K562 (cell line): ENCODE measurements at regions of chr19 and their contacts with region 1.

Region 1: GRCh38 chr19:45643024-45643926 is 4.1 kb upstream of the EML2 start:
- DNase-seq: peak; percentile 68 to 93 (median 76)
- ATAC-seq: peak; percentile 36
- H3K4me3 ChIP-seq: peak overlapping the region; percentile 38
- H3K27ac ChIP-seq: peak overlapping the region; percentile 80; the same call in 2 of the 3 replicates
- H3K4me1 ChIP-seq: peaks cover 31 to 62% of the 10 kb centered on the region in 2 experiments
- H3K27me3 ChIP-seq: no peaks in the 10 kb centered on the region
- CTCF ChIP-seq: peak; percentile 96 to 99 (median 97)
- EP300 ChIP-seq: 0 out of 2 replicates have a peak, but pooled peaks have one; percentile 12
- POLR2A ChIP-seq: no peak
- RAD21 ChIP-seq: peak; percentile 95 to 96

Region 2: GRCh38 chr19:45385392-45386221 is 257.7 kb before region 1 on chr19:
- CTCF ChIA-PET with region 1: no interaction called
- POLR2A ChIA-PET with region 1: no interaction called
- in situ Hi-C with region 1: no loop called
- intact Hi-C with region 1: no loop called
- DNase-seq: peak in 2 of 4 experiments; percentile 6 to 10
- ATAC-seq: no peak
- H3K4me3 ChIP-seq: no peak overlapping the region
- H3K27ac ChIP-seq: no peak overlapping the region
- H3K4me1 ChIP-seq: peaks cover 0 to 20% of the 10 kb centered on the region in 2 experiments; a peak in 2 of 5 replicates
- H3K27me3 ChIP-seq: peaks cover 0 to 14% of the 10 kb centered on the region in 2 experiments; a peak in 3 of 5 replicates
- CTCF ChIP-seq: no peak
- EP300 ChIP-seq: no peak
- POLR2A ChIP-seq: no peak
- RAD21 ChIP-seq: no peak

Region 3: GRCh38 chr19:45439569-45440254 is 203.6 kb before region 1 on chr19:
- CTCF ChIA-PET with region 1: interaction called, 12 read pairs
- POLR2A ChIA-PET with region 1: no interaction called
- in situ Hi-C with region 1: no loop called
- intact Hi-C with region 1: loop called (anchors 5 kb)
- DNase-seq: peak; percentile 82 to 96 (median 86)
- ATAC-seq: peak; percentile 81
- H3K4me3 ChIP-seq: peak overlapping the region; percentile 68
- H3K27ac ChIP-seq: peak overlapping the region; percentile 93
- H3K4me1 ChIP-seq: peaks cover 31 to 48% of the 10 kb centered on the region in 2 experiments
- H3K27me3 ChIP-seq: no peaks in the 10 kb centered on the region
- CTCF ChIP-seq: peak; percentile 86 to 92 (median 90)
- EP300 ChIP-seq: peak; percentile 81
- POLR2A ChIP-seq: peak; percentile 48; the same call in 1 of the 2 replicates
- RAD21 ChIP-seq: peak; percentile 96 to 99

Region 4: GRCh38 chr19:45506246-45506990 is 136.9 kb before region 1 on chr19:
- CTCF ChIA-PET with region 1: no interaction called
- POLR2A ChIA-PET with region 1: no interaction called
- in situ Hi-C with region 1: no loop called
- intact Hi-C with region 1: loop called (anchors 5 kb)
- DNase-seq: peak; percentile 89 to 98 (median 91)
- ATAC-seq: peak; percentile 81
- H3K4me3 ChIP-seq: peak overlapping the region; percentile 99
- H3K27ac ChIP-seq: peak overlapping the region; percentile 98
- H3K4me1 ChIP-seq: peaks cover 34 to 51% of the 10 kb centered on the region in 2 experiments
- H3K27me3 ChIP-seq: no peaks in the 10 kb centered on the region
- CTCF ChIP-seq: peak; percentile 70 to 79 (median 74)
- EP300 ChIP-seq: no peak; the same call in 1 of the 2 replicates
- POLR2A ChIP-seq: peak; percentile 85
- RAD21 ChIP-seq: peak in 1 of 2 experiments; percentile 49; a peak in 2 of 4 replicates

Region 5: DNA sequence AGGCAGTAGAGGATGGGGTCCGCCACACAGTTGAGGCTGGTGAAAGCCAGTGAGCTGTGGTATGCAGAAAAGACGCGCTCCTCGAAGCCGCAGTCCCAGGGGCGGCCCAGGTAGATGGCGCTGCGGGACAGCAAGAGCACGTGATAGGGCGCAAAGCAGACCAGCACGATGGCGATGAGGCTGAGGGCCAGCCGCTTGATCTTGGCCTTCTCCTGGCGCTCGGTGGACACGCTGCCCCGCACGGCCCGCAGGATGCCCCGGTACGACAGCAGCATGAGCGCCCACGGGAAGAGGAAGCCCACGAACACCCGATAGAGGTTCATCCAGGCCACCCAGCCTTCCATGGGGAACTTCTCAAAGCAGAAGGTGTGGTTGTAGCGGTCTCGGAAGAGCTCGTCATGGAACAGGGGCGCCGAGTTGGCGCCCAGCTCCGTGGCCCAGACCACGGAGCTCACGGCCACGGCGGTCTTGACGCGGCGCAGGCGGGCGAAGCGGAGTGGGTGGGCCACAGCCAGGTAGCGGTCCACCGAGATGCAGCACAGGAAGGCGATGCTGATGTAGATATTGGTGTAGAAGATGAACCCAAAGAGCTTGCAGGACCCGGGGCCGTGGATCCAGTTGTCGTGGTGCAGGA is 52.2 kb before region 1 on chr19:
- CTCF ChIA-PET with region 1: interaction called, 25 read pairs
- POLR2A ChIA-PET with region 1: interaction called, 9 read pairs
- in situ Hi-C with region 1: no loop called
- intact Hi-C with region 1: loop called (anchors 1 kb)
- DNase-seq: peak; percentile 79 to 88 (median 82)
- ATAC-seq: peak; percentile 98
- H3K4me3 ChIP-seq: no peak overlapping the region
- H3K27ac ChIP-seq: no peak overlapping the region
- H3K4me1 ChIP-seq: peaks cover 21 to 22% of the 10 kb centered on the region in 2 experiments
- H3K27me3 ChIP-seq: 0 out of 5 replicates have a peak, but pooled peaks cover 0 to 4% of the 10 kb centered on the region in 2 experiments
- CTCF ChIP-seq: peak; percentile 83 to 94 (median 88)
- EP300 ChIP-seq: no peak
- POLR2A ChIP-seq: no peak
- RAD21 ChIP-seq: peak; percentile 71 to 91

Region 6: DNA sequence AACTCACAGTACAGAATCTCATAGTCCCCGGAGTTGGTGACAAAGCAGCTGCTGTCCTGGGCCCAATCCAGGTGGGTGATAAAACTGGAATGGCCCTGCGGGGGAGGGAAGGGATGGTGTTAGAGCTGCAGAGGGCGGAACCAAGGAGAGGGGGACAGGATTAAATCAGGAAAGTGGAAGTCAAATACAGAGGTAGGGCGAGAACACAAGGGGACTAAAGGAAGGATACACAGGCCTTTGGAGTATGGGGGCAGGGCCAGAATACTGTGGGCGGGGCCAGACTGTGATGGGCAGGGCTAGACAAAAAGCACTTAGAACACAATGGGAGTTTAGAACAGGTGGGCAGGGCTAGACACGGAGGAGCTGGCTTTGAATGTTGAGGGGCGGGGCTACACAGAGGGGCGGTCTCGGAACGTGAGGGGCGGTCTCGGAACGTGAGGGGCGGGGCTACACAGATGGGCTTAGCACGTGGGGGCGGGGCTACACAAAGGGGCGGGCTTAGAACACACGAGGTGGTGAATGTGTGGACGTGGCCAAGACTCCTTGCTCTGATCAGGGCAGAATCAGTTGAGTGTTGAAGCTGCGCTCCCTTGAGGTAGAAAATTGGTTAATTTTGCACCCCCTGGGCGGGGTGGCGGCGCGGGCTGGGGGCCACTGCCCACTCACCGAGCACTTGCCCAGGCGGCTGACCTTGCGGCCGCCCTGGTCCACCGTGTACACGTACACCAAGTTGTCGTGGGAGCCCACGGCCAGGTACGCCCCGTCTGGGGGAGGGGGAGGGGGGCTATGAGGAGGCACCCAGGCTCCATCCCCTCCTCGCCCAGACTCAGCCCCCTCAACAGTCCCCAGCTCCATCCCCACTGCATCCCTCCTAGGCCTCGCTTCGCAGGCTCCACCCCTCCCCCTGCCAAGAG is 27.2 kb before region 1 on chr19:
- CTCF ChIA-PET with region 1: no interaction called
- POLR2A ChIA-PET with region 1: interaction called, 35 read pairs
- in situ Hi-C with region 1: no loop called
- intact Hi-C with region 1: no loop called
- DNase-seq: peak; percentile 97 to 98 (median 98)
- ATAC-seq: peak; percentile 99
- H3K4me3 ChIP-seq: peak overlapping the region; percentile 33
- H3K27ac ChIP-seq: peak overlapping the region; percentile 81
- H3K4me1 ChIP-seq: peaks cover 11 to 19% of the 10 kb centered on the region in 2 experiments
- H3K27me3 ChIP-seq: no peaks in the 10 kb centered on the region
- CTCF ChIP-seq: no peak
- EP300 ChIP-seq: no peak
- POLR2A ChIP-seq: peak; percentile 78
- RAD21 ChIP-seq: no peak

Region 7: DNA sequence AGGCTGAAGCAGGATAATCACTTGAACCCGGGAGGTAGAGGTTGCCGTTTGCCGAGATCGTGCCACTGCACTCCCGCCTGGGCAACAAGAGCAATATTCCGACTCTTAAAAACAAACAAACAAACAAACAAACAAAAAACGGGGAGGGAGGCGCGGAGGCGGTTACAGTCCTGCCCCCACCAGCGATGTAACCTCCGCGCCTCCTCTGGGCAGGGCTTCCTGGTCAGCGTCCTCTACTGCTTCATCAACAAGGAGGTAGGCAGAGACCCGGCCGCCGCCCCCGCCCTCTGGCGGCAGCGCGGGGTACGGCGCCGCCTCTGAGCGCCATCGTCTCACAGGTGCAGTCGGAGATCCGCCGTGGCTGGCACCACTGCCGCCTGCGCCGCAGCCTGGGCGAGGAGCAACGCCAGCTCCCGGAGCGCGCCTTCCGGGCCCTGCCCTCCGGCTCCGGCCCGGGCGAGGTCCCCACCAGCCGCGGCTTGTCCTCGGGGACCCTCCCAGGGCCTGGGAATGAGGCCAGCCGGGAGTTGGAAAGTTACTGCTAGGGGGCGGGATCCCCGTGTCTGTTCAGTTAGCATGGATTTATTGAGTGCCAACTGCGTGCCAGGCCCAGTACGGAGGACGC is 38.2 kb after region 1 on chr19:
- CTCF ChIA-PET with region 1: no interaction called
- POLR2A ChIA-PET with region 1: interaction called, 4 read pairs
- in situ Hi-C with region 1: no loop called
- intact Hi-C with region 1: loop called (anchors 2 kb)
- DNase-seq: peak; percentile 78 to 89 (median 83)
- ATAC-seq: peak; percentile 94
- H3K4me3 ChIP-seq: peak overlapping the region; percentile 20
- H3K27ac ChIP-seq: peak overlapping the region; percentile 32; the same call in 1 of the 3 replicates
- H3K4me1 ChIP-seq: peaks cover 3 to 24% of the 10 kb centered on the region in 2 experiments; a peak in 2 of 5 replicates
- H3K27me3 ChIP-seq: no peaks in the 10 kb centered on the region
- CTCF ChIP-seq: peak; percentile 90 to 95 (median 93)
- EP300 ChIP-seq: no peak
- POLR2A ChIP-seq: 0 out of 2 replicates have a peak, but pooled peaks have one; percentile 12
- RAD21 ChIP-seq: peak; percentile 62 to 76